Prostate gland (tissue), 2 donors: ENCODE measurements at regions of chr1 and their contacts with region 1.

Region 1: DNA sequence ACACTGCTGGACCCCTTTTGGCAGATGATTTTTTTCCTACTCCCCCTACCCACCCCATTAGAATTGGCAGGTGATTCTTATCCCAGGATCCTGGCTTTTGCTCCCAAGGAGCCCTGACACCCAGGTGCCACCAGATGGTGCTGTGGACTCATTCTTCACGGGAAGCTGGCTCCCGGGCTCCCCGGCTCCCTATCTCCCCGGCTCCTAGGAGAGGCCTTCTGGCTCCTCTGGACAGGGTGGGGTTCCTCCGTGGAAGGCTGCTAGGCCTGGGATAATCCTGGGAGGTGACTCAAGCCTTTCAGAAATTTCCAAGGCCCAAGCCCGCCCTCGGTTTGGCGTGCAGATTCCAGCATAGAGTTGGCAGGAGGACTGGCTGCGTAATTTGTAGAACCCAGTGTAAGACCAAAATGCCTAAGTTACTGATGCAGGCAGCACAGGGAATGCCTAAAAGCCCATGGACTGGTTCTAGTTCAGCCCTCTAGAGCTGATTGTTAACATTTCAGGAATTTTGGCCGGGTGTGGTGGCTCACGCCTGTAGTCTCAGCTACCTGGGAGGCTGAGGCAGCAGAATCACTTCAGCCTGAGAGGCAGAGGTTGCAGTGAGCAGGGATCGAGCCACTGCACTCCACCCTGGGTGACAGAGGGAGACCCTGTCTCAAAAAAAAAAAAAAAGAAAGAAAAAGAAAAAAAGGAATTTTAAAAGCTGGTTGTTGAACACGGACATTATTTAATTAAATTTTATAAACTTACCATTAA is 6.8 kb upstream of the BSDC1 start:
- DNase-seq: peak; percentile 72
- H3K4me3 ChIP-seq: no peak overlapping the region
- H3K27ac ChIP-seq: peak overlapping the region in 1 of 2 donors; percentile 41
- H3K4me1 ChIP-seq: no peaks in the 10 kb centered on the region
- H3K27me3 ChIP-seq: no peaks in the 10 kb centered on the region
- CTCF ChIP-seq: peak; percentile 64 to 87 (median 78)
- POLR2A ChIP-seq: no peak

Region 2: GRCh38 chr1:32470991-32471694 is 70.1 kb after region 1 on chr1:
- intact Hi-C with region 1: no loop called
- DNase-seq: no peak
- H3K4me3 ChIP-seq: no peak overlapping the region
- H3K27ac ChIP-seq: no peak overlapping the region
- H3K4me1 ChIP-seq: no peaks in the 10 kb centered on the region
- H3K27me3 ChIP-seq: no peaks in the 10 kb centered on the region
- CTCF ChIP-seq: no peak
- POLR2A ChIP-seq: no peak

Region 3: DNA sequence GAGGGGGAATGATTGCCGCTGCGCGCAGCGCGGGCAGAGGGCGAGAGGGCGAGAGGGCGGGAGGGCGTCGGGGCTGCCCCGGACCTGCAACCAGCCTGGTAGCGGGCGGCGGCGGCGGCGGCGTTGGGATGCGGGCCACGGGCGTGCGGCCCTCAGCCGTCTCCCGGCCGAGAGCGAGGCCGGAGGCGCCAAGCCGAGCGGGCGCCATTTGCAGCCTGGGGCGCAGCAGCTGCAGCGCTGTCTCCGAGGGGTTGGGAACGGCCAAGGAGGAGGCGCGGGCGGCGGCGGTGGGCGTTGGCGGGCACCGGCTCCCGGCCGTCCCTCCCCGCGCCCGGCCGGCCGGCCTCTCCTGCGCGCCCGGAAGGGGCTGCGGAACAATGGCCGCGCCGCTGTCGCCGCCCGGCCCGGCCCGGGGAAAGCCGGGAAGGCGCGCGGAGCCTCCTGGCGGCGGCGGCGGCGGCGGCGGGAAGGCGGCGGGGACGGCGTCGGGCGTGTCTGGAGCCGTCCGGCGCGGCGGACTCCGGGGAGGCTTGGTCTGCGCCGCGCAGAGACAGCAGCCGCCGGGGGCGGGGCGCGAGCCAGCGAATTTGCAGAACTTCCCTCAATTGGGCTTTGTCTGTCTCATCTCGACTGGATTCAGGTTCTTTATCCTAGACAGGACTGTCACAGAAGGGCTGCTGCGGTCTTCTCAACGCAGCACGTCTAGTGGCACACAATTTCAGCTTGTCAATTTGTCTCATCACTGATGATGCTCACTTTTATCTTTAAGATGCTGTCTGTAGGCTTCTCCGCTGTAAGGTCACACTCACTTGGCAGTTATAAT is 99.5 kb after region 1 on chr1:
- intact Hi-C with region 1: no loop called
- DNase-seq: peak; percentile 51
- H3K4me3 ChIP-seq: peak overlapping the region; percentile 61 to 83
- H3K27ac ChIP-seq: peak overlapping the region; percentile 96 to 98
- H3K4me1 ChIP-seq: peaks cover 12% of the 10 kb centered on the region
- H3K27me3 ChIP-seq: no peaks in the 10 kb centered on the region
- CTCF ChIP-seq: peak in 2 of 4 experiments; percentile 35 to 52
- POLR2A ChIP-seq: no peak

Region 4: DNA sequence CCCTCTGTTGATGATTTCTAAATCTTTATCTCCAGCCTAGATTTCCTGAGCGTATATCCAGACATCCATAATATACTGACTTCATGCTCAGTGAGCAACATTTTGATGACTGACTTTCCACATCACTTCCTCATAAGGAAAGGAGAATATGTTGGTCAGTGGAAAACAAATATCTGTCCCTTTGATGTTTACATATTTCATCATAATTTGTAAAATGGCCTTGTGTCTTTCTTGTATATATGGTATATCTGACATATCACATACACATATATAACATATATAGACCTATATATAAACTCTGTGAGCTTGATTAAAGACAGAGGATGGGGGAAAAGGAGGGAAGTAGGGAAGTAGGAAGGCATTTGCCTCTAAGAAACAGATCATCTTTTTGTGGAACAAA is 156.8 kb after region 1 on chr1:
- intact Hi-C with region 1: no loop called
- DNase-seq: no peak
- H3K4me3 ChIP-seq: no peak overlapping the region
- H3K27ac ChIP-seq: no peak overlapping the region
- H3K4me1 ChIP-seq: no peaks in the 10 kb centered on the region
- H3K27me3 ChIP-seq: no peaks in the 10 kb centered on the region
- CTCF ChIP-seq: no peak
- POLR2A ChIP-seq: no peak

Region 5: DNA sequence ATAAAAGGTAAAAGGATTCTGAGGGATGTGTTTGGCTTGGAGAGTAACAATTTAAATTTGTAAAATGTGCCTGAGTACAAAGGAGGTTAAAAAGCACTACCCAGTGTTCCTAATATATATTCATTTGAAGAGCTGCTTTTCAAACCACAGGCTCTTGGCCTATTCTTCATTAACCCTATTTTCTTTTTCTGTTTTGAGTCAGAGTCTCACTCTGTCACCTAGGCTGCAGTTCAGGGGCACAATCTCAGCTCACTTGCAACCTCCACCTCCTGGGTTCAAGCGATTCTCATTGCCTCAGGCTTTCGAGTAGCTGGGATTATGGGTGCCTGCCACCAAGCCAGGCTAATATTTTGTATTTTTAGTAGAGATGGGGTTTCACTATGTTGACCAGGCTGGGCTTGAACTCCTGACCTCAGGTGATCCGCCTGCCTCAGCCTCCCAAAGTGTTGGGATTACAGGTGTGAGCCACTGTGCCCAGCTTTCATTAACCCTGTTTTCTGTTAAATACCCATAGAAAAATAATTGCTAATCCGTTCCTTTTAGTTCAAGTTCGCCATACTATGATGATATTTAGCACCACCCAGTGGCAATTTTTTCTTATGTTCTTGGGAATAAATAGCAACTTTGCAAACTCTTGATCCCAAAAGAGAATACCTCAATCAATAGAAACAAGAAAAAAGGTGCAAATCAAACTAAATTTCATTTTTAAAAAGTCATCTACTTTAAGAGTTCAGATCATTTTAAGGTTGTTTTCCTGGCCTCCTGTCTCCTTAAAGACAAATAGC is 218.8 kb after region 1 on chr1:
- intact Hi-C with region 1: loop called (anchors 10 kb)
- DNase-seq: no peak
- H3K4me3 ChIP-seq: no peak overlapping the region
- H3K27ac ChIP-seq: no peak overlapping the region
- H3K4me1 ChIP-seq: no peaks in the 10 kb centered on the region
- H3K27me3 ChIP-seq: no peaks in the 10 kb centered on the region
- CTCF ChIP-seq: peak in 1 of 4 experiments; percentile 31
- POLR2A ChIP-seq: no peak

Region 6: GRCh38 chr1:32733582-32734321 is 332.7 kb after region 1 on chr1:
- intact Hi-C with region 1: no loop called
- DNase-seq: no peak
- H3K4me3 ChIP-seq: no peak overlapping the region
- H3K27ac ChIP-seq: no peak overlapping the region
- H3K4me1 ChIP-seq: no peaks in the 10 kb centered on the region
- H3K27me3 ChIP-seq: no peaks in the 10 kb centered on the region
- CTCF ChIP-seq: no peak
- POLR2A ChIP-seq: no peak

Region 7: GRCh38 chr1:32876341-32877210 is 475.5 kb after region 1 on chr1:
- intact Hi-C with region 1: loop called (anchors 10 kb)
- DNase-seq: no peak
- H3K4me3 ChIP-seq: no peak overlapping the region
- H3K27ac ChIP-seq: no peak overlapping the region
- H3K4me1 ChIP-seq: no peaks in the 10 kb centered on the region
- H3K27me3 ChIP-seq: no peaks in the 10 kb centered on the region
- CTCF ChIP-seq: peak; percentile 64 to 85 (median 74)
- POLR2A ChIP-seq: no peak